Naive thymus-derived CD4-positive, alpha-beta T cell (primary cell): ENCODE measurements at regions of chr12 and their contacts with region 1.

Region 1: GRCh38 chr12:112012775-112013600 is at the starts of genes ERP29 and TMEM116:
- DNase-seq: peak; percentile 98 to 100 (median 99)
- ATAC-seq: peak; percentile 92
- H3K4me3 ChIP-seq: peak within 1 kb of the TSS; percentile 90
- H3K4me3 Mint-ChIP-seq: peak within 1 kb of the TSS; percentile 86 to 97 (median 91)
- H3K27ac ChIP-seq: peak within 1 kb of the TSS; percentile 96
- H3K27ac Mint-ChIP-seq: peak within 1 kb of the TSS; percentile 95 to 99 (median 97)
- H3K4me1 ChIP-seq: peaks cover 29 to 32% of the 10 kb centered on the region in 2 donors
- H3K4me1 Mint-ChIP-seq: peaks cover 41 to 67% (median 51%) of the 10 kb centered on the region in 7 donors
- H3K27me3 ChIP-seq: no peaks in the 10 kb centered on the region
- H3K27me3 Mint-ChIP-seq: no peaks in the 10 kb centered on the region
- total RNA-seq, gene ERP29: 115 to 184 (median 127) TPM
- total RNA-seq, gene TMEM116: 12.6 to 29.3 (median 23.0) TPM

Region 2: GRCh38 chr12:111211910-111212757 is 800.9 kb before region 1 on chr12:
- CTCF ChIA-PET with region 1: no interaction called
- POLR2A ChIA-PET with region 1: no interaction called
- intact Hi-C with region 1: no loop called
- DNase-seq: peak in 2 of 9 donors; percentile 4 to 6
- ATAC-seq: no peak
- H3K4me3 ChIP-seq: no peak overlapping the region
- H3K4me3 Mint-ChIP-seq: no peak overlapping the region
- H3K27ac ChIP-seq: no peak overlapping the region
- H3K27ac Mint-ChIP-seq: no peak overlapping the region
- H3K4me1 ChIP-seq: no peaks in the 10 kb centered on the region
- H3K4me1 Mint-ChIP-seq: no peaks in the 10 kb centered on the region
- H3K27me3 ChIP-seq: peaks cover 0 to 2% of the 10 kb centered on the region in 2 donors
- H3K27me3 Mint-ChIP-seq: peaks cover 0 to 17% (median 10%) of the 10 kb centered on the region in 5 donors

Region 3: DNA sequence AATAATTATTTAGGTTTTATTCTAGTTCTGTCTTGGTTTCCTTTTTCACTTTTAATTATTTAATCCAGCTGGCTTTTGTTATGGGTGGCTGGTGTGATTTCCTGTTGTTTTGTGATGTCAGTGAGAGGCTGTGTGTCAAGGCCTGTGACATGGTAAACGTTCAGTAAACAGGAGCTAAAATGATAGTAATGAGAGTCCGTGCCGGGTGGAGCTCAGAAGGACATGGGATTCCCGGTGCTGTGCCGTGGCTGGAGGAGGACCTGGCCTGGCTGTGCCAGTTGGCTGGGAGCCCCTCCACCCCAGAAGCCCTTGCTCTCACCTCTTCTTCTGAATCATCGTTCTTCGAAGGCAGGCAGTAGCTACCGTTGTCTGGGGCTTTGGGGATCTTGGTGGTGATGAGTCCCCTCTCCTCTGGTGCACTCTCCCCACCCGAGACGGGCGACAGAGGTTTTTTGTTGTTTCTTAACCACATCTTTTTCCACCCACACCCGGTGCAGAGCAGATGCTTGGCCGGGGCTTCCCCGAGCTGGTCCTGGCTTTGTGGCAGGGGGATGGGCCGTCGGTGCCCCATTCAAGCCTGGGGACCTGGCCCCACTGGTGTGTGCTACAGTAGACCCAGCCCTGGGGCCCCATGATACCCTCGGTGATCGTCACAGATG is 578.2 kb before region 1 on chr12:
- CTCF ChIA-PET with region 1: no interaction called
- POLR2A ChIA-PET with region 1: no interaction called
- intact Hi-C with region 1: loop called in 1 of 2 experiments (anchors 5 kb)
- DNase-seq: peak; percentile 62 to 94 (median 83)
- ATAC-seq: peak; percentile 83
- H3K4me3 ChIP-seq: peak overlapping the region; percentile 56
- H3K4me3 Mint-ChIP-seq: peak overlapping the region; percentile 68 to 88 (median 85)
- H3K27ac ChIP-seq: peak overlapping the region; percentile 94
- H3K27ac Mint-ChIP-seq: peak overlapping the region; percentile 97 to 99 (median 99)
- H3K4me1 ChIP-seq: peaks cover 84% of the 10 kb centered on the region in 2 donors
- H3K4me1 Mint-ChIP-seq: peaks cover 79 to 96% (median 91%) of the 10 kb centered on the region in 7 donors
- H3K27me3 ChIP-seq: no peaks in the 10 kb centered on the region
- H3K27me3 Mint-ChIP-seq: no peaks in the 10 kb centered on the region

Region 4: GRCh38 chr12:111819191-111820150 is 193.5 kb before region 1 on chr12:
- CTCF ChIA-PET with region 1: no interaction called
- POLR2A ChIA-PET with region 1: no interaction called
- intact Hi-C with region 1: loop called in 1 of 2 experiments (anchors 5 kb)
- DNase-seq: no peak
- ATAC-seq: no peak
- H3K4me3 ChIP-seq: no peak overlapping the region
- H3K4me3 Mint-ChIP-seq: no peak overlapping the region
- H3K27ac ChIP-seq: no peak overlapping the region
- H3K27ac Mint-ChIP-seq: peak overlapping the region in 1 of 9 donors; percentile 40
- H3K4me1 ChIP-seq: no peaks in the 10 kb centered on the region
- H3K4me1 Mint-ChIP-seq: peaks cover 0 to 2% (median 0%) of the 10 kb centered on the region in 7 donors
- H3K27me3 ChIP-seq: no peaks in the 10 kb centered on the region
- H3K27me3 Mint-ChIP-seq: peaks cover 4 to 47% (median 13%) of the 10 kb centered on the region in 5 donors

Region 5: GRCh38 chr12:111887926-111888745 is 124.9 kb before region 1 on chr12:
- CTCF ChIA-PET with region 1: no interaction called
- POLR2A ChIA-PET with region 1: no interaction called
- intact Hi-C with region 1: no loop called
- DNase-seq: no peak
- ATAC-seq: peak; percentile 14
- H3K4me3 ChIP-seq: no peak overlapping the region
- H3K4me3 Mint-ChIP-seq: no peak overlapping the region
- H3K27ac ChIP-seq: no peak overlapping the region
- H3K27ac Mint-ChIP-seq: no peak overlapping the region
- H3K4me1 ChIP-seq: no peaks in the 10 kb centered on the region
- H3K4me1 Mint-ChIP-seq: no peaks in the 10 kb centered on the region
- H3K27me3 ChIP-seq: no peaks in the 10 kb centered on the region
- H3K27me3 Mint-ChIP-seq: no peaks in the 10 kb centered on the region

Region 6: GRCh38 chr12:111926631-111927030 is 86.4 kb before region 1 on chr12:
- CTCF ChIA-PET with region 1: no interaction called
- POLR2A ChIA-PET with region 1: no interaction called
- intact Hi-C with region 1: no loop called
- DNase-seq: no peak
- ATAC-seq: no peak
- H3K4me3 ChIP-seq: no peak overlapping the region
- H3K4me3 Mint-ChIP-seq: no peak overlapping the region
- H3K27ac ChIP-seq: no peak overlapping the region
- H3K27ac Mint-ChIP-seq: no peak overlapping the region
- H3K4me1 ChIP-seq: no peaks in the 10 kb centered on the region
- H3K4me1 Mint-ChIP-seq: no peaks in the 10 kb centered on the region
- H3K27me3 ChIP-seq: no peaks in the 10 kb centered on the region
- H3K27me3 Mint-ChIP-seq: no peaks in the 10 kb centered on the region

Region 7: GRCh38 chr12:111953455-111953854 is 59.5 kb before region 1 on chr12:
- CTCF ChIA-PET with region 1: interaction called, 6 read pairs
- POLR2A ChIA-PET with region 1: interaction called, 12 read pairs
- intact Hi-C with region 1: no loop called
- DNase-seq: no peak
- ATAC-seq: no peak
- H3K4me3 ChIP-seq: no peak overlapping the region
- H3K4me3 Mint-ChIP-seq: no peak overlapping the region
- H3K27ac ChIP-seq: no peak overlapping the region
- H3K27ac Mint-ChIP-seq: peak overlapping the region in 4 of 9 donors; percentile 16 to 68 (median 26)
- H3K4me1 ChIP-seq: peaks cover 11 to 13% of the 10 kb centered on the region in 2 donors
- H3K4me1 Mint-ChIP-seq: peaks cover 15 to 46% (median 33%) of the 10 kb centered on the region in 7 donors
- H3K27me3 ChIP-seq: no peaks in the 10 kb centered on the region
- H3K27me3 Mint-ChIP-seq: no peaks in the 10 kb centered on the region

Region 8: DNA sequence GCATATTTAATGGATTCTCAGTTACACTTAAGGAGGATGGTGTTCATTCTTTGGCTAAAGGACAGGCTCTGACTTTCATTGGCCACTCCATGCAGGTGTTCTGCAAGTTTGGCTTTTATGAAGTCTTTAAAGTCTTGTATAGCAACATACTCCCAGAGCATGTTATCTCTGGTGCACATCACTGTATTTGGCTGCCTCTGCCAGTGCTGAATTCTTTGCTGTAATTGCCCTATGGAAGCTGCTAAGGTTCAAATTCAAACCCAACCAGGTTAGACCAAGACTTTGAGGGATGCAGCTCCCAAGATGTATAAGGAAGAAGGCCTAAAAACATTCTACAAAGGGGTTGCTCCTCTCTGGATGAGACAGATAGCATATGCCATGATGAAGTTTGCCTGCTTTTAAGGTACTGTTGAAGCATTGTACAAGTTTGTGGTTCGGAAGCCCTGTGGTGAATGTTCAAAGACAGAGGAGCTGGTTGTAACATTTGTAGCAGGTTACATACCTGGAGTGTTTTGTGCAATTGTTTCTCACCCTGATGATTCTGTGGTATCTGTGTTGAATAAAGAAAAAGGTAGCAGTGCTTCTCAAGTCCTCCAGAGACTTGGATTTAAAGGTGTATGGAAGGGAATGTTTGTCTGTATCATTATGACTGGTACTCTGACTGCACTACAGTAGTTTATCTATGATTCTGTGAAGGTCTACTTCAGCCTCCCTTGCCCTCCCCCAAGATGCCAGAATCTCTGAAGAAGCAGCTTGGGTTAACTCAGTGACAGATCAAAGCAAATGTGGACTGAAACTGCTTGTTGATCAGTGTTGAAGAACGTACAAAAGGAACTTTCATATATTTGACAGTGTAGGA is 19.5 kb before region 1 on chr12:
- CTCF ChIA-PET with region 1: interaction called, 25 read pairs
- POLR2A ChIA-PET with region 1: interaction called, 285 read pairs
- intact Hi-C with region 1: loop called (anchors 1 kb)
- DNase-seq: peak in 7 of 9 donors; percentile 68 to 83 (median 74)
- ATAC-seq: peak; percentile 87
- H3K4me3 ChIP-seq: peak overlapping the region; percentile 68
- H3K4me3 Mint-ChIP-seq: peak overlapping the region; percentile 79 to 99 (median 86)
- H3K27ac ChIP-seq: peak overlapping the region; percentile 71
- H3K27ac Mint-ChIP-seq: peak overlapping the region; percentile 80 to 97 (median 91)
- H3K4me1 ChIP-seq: peaks cover 61 to 62% of the 10 kb centered on the region in 2 donors
- H3K4me1 Mint-ChIP-seq: peaks cover 48 to 85% (median 75%) of the 10 kb centered on the region in 7 donors
- H3K27me3 ChIP-seq: no peaks in the 10 kb centered on the region
- H3K27me3 Mint-ChIP-seq: no peaks in the 10 kb centered on the region

Region 9: GRCh38 chr12:112125250-112125999 is 112.4 kb after region 1 on chr12 and contains the start of gene TRAFD1:
- CTCF ChIA-PET with region 1: no interaction called
- POLR2A ChIA-PET with region 1: interaction called, 4 read pairs
- intact Hi-C with region 1: loop called (anchors 1 kb)
- DNase-seq: peak; percentile 96 to 99 (median 98)
- ATAC-seq: peak; percentile 100
- H3K4me3 ChIP-seq: peak within 1 kb of the TSS; percentile 97
- H3K4me3 Mint-ChIP-seq: peak within 1 kb of the TSS; percentile 74 to 91 (median 88)
- H3K27ac ChIP-seq: peak within 1 kb of the TSS; percentile 93
- H3K27ac Mint-ChIP-seq: peak within 1 kb of the TSS; percentile 77 to 95 (median 88)
- H3K4me1 ChIP-seq: peaks cover 26 to 38% of the 10 kb centered on the region in 2 donors
- H3K4me1 Mint-ChIP-seq: peaks cover 21 to 49% (median 39%) of the 10 kb centered on the region in 7 donors
- H3K27me3 ChIP-seq: no peaks in the 10 kb centered on the region
- H3K27me3 Mint-ChIP-seq: peaks cover 0 to 10% (median 0%) of the 10 kb centered on the region in 5 donors
- total RNA-seq, gene TRAFD1: 22.1 to 86.6 (median 42.7) TPM

Region 10: DNA sequence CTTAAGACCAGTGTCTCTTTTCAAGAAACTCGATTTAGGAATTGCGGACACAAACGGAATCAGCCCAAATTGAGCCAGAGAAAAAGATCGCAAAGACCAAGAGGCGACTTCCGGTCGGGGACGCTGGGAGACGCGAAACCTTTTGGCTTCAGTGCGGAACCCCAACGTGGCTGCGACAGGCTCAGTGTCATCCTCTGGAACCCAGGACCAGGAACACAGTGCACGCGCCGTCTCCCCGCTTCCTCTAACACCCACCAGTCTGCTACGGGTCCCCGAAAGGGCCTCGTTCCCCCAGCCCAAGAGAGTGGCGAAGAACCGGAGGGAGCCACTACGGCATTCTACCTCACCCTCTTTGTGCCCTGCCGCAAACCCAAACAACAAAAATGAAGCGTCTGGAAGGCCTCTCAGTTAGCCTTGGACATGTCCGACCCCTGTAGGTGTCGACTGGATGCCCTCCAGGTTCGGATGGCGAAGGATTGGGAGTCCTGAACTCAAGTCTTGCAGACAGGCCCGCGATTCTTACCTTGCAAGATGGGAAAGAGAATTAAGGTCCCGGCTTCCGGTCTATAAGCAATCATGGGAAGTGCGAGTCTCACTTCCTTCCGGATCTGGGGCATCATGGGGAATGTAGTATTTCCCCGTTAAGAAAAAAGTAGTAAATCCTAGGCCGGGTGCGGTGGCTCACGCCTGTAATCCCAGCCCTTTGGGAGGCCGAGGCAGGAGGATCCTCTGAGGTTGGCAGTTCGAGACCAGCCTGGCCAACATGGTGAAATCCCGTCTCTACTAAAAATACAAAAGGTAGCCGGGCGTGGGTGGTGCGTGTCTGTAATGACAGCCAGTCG is 396.3 kb after region 1 on chr12 and contains the start of gene RPL6:
- CTCF ChIA-PET with region 1: no interaction called
- POLR2A ChIA-PET with region 1: no interaction called
- intact Hi-C with region 1: loop called (anchors 1 to 5 kb)
- DNase-seq: peak; percentile 61 to 88 (median 84)
- ATAC-seq: peak; percentile 94
- H3K4me3 ChIP-seq: peak within 1 kb of the TSS; percentile 93
- H3K4me3 Mint-ChIP-seq: peak within 1 kb of the TSS; percentile 97 to 100 (median 100)
- H3K27ac ChIP-seq: peak within 1 kb of the TSS; percentile 84
- H3K27ac Mint-ChIP-seq: peak within 1 kb of the TSS; percentile 99 to 100 (median 100)
- H3K4me1 ChIP-seq: peaks cover 18 to 20% of the 10 kb centered on the region in 2 donors
- H3K4me1 Mint-ChIP-seq: peaks cover 17 to 48% (median 36%) of the 10 kb centered on the region in 7 donors
- H3K27me3 ChIP-seq: no peaks in the 10 kb centered on the region
- H3K27me3 Mint-ChIP-seq: no peaks in the 10 kb centered on the region
- total RNA-seq, gene RPL6: 1,134 to 1,668 (median 1,601) TPM

Region 11: GRCh38 chr12:112506513-112507166 is 493.7 kb after region 1 on chr12:
- CTCF ChIA-PET with region 1: no interaction called
- POLR2A ChIA-PET with region 1: no interaction called
- intact Hi-C with region 1: no loop called
- DNase-seq: no peak
- ATAC-seq: no peak
- H3K4me3 ChIP-seq: no peak overlapping the region
- H3K4me3 Mint-ChIP-seq: no peak overlapping the region
- H3K27ac ChIP-seq: no peak overlapping the region
- H3K27ac Mint-ChIP-seq: no peak overlapping the region
- H3K4me1 ChIP-seq: no peaks in the 10 kb centered on the region
- H3K4me1 Mint-ChIP-seq: no peaks in the 10 kb centered on the region
- H3K27me3 ChIP-seq: no peaks in the 10 kb centered on the region
- H3K27me3 Mint-ChIP-seq: no peaks in the 10 kb centered on the region